Heart right ventricle (tissue), 16 donors: ENCODE measurements at regions of chr13 and their contacts with region 1.

Region 1: GRCh38 chr13:73708393-73708985 is 425.7 kb downstream of the KLF12 start:
- DNase-seq: peak in 1 of 2 donors; percentile 38
- ATAC-seq: peak in 6 of 8 donors; percentile 52 to 75 (median 68)
- H3K4me3 ChIP-seq: no peak overlapping the region
- H3K27ac ChIP-seq: no peak overlapping the region
- H3K4me1 ChIP-seq: no peaks in the 10 kb centered on the region
- H3K27me3 ChIP-seq: no peaks in the 10 kb centered on the region
- CTCF ChIP-seq: peak; percentile 40 to 82 (median 70)

Region 2: DNA sequence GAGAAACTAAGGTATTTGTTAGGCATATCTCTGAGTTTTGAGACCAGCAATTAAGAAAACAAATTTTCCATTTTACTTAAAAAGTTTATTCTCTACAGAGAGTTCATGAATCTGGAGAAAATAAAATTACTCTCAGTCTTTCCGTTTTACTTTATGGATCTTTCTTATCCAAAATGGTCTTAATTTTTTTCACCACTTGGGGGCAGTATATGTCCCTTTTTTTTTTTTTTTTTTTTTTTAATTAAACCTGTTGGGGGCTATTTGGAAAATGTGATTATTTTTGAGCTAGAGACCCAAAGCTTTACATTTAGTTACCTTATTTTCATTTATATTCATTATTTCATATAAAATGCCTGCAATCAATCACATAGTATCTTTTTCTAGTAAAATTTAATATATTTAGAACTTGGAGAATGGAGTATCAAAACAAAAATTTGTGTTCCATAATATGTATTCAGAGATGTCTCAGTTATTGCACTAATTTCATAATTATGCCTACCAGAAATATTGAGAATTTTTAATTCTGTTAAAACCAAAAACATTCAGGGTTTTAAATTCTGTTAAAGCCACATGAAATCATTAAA is 899.5 kb before region 1 on chr13:
- intact Hi-C with region 1: loop called in 4 of 10 experiments (anchors 10 kb)
- DNase-seq: no peak
- ATAC-seq: no peak
- H3K4me3 ChIP-seq: no peak overlapping the region
- H3K27ac ChIP-seq: no peak overlapping the region
- H3K4me1 ChIP-seq: no peaks in the 10 kb centered on the region
- H3K27me3 ChIP-seq: no peaks in the 10 kb centered on the region
- CTCF ChIP-seq: peak; percentile 53 to 75 (median 71)

Region 3: DNA sequence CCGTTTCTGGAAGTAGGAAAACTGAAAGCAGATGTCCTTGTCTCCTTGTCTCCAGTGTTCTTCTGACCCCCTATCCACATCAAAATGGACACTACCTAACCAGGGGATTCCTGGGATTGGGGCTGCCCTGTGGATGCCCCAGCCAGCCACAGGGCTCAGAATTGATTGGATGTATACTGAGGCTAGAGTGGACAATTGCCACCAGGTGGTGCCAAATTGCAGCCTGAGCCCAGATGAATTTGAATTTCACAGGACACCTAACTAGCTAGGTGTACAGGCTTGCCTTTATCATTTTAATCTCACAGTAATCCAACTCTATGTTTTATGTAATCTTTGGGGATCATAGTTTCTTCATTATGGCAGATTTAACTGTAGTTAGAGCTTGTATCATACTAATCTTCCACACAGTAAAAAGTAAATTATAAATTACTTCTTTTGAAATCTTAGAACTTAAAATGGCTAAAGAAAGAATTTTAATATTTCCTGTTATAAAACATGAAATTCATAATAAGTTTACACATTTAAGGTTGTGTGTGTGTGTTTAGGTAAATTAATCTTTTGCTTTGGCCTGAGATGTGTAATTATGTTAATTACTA is 868.6 kb before region 1 on chr13:
- intact Hi-C with region 1: loop called in 2 of 10 experiments (anchors 10 kb)
- DNase-seq: no peak
- ATAC-seq: peak in 7 of 8 donors; percentile 33 to 74 (median 53)
- H3K4me3 ChIP-seq: no peak overlapping the region
- H3K27ac ChIP-seq: no peak overlapping the region
- H3K4me1 ChIP-seq: no peaks in the 10 kb centered on the region
- H3K27me3 ChIP-seq: no peaks in the 10 kb centered on the region
- CTCF ChIP-seq: peak in 8 of 9 donors; percentile 19 to 68 (median 56)

Region 4: DNA sequence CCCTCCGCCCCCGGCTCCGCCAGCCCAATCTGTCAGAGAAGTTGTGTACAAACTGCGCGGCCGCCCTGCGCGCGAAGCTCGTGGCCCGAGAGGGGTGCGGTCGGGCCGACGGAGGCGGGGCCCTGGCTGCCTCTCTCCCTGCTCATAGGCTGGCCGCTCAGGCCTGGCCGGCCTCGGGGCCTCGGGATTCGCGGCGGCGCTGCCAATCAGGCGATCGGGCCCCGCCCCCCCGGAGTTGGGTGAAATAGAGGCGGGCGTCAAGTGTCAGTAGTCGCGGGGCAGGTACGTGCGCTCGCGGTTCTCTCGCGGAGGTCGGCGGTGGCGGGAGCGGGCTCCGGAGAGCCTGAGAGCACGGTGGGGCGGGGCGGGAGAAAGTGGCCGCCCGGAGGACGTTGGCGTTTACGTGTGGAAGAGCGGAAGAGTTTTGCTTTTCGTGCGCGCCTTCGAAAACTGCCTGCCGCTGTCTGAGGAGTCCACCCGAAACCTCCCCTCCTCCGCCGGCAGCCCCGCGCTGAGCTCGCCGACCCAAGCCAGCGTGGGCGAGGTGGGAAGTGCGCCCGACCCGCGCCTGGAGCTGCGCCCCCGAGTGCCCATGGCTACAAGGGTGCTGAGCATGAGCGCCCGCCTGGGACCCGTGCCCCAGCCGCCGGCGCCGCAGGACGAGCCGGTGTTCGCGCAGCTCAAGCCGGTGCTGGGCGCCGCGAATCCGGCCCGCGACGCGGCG is 649.6 kb before region 1 on chr13 and contains the start of gene KLF5:
- intact Hi-C with region 1: loop called in 4 of 10 experiments (anchors 5 to 10 kb)
- DNase-seq: peak; percentile 95 to 96
- ATAC-seq: peak; percentile 98 to 100 (median 99)
- H3K4me3 ChIP-seq: peak within 1 kb of the TSS; percentile 47 to 91 (median 79)
- H3K27ac ChIP-seq: peak within 1 kb of the TSS in 9 of 10 donors; percentile 1 to 74 (median 55)
- H3K4me1 ChIP-seq: peaks cover 0 to 24% (median 14%) of the 10 kb centered on the region in 9 donors
- H3K27me3 ChIP-seq: peaks cover 0 to 40% (median 36%) of the 10 kb centered on the region in 7 donors
- CTCF ChIP-seq: no peak
- total RNA-seq, gene KLF5: 0.83 to 4.7 (median 3.1) TPM

Region 5: DNA sequence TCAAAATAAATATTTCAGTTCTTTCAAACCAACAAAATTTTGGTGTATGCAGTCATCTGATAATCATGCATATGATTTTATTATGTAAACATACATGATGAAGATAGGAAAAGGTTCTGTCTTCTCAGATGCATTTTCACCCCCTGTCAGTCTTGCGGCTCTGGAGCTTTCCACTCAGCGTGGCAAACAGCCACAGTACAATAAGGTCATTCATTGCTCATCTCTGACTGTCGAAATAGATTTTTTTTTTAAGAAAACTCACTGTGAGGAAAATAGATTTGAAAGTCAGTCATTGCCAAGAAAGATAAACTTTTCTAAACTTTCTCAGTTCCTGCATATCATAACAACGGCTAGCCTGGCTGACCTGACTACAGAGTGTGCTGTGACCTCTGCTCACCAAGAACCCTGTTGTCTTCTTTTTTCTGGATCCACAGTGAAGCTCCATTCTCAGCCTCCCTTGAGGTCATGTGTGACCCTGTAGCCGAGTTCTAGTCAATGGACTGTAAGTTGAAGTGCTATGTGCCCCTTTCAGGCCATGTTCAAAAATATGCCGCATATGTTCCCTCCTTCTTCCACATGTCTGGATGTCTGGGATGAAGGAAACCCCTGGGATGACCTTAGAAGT is 130.1 kb before region 1 on chr13:
- intact Hi-C with region 1: no loop called
- DNase-seq: no peak
- ATAC-seq: no peak
- H3K4me3 ChIP-seq: no peak overlapping the region
- H3K27ac ChIP-seq: no peak overlapping the region
- H3K4me1 ChIP-seq: no peaks in the 10 kb centered on the region
- H3K27me3 ChIP-seq: no peaks in the 10 kb centered on the region
- CTCF ChIP-seq: no peak